ENCODE measurements at regions of chr9 and their contacts with region 1.

Region 1: GRCh38 chr9:134067904-134068743 is at the start of gene BRD3:
- DNase-seq: peak; percentile 91
- H3K4me3 ChIP-seq: peak within 1 kb of the TSS; percentile 67 to 94 (median 94)
- H3K27ac ChIP-seq: peak within 1 kb of the TSS; percentile 97 to 100 (median 98)
- H3K4me1 ChIP-seq: peaks cover 0 to 45% (median 37%) of the 10 kb centered on the region in 4 donors
- H3K27me3 ChIP-seq: no peaks in the 10 kb centered on the region
- CTCF ChIP-seq: no peak
- EP300 ChIP-seq: no peak
- POLR2A ChIP-seq: no peak
- total RNA-seq, gene BRD3: 21.8 to 34.5 (median 25.7) TPM

Region 2: DNA sequence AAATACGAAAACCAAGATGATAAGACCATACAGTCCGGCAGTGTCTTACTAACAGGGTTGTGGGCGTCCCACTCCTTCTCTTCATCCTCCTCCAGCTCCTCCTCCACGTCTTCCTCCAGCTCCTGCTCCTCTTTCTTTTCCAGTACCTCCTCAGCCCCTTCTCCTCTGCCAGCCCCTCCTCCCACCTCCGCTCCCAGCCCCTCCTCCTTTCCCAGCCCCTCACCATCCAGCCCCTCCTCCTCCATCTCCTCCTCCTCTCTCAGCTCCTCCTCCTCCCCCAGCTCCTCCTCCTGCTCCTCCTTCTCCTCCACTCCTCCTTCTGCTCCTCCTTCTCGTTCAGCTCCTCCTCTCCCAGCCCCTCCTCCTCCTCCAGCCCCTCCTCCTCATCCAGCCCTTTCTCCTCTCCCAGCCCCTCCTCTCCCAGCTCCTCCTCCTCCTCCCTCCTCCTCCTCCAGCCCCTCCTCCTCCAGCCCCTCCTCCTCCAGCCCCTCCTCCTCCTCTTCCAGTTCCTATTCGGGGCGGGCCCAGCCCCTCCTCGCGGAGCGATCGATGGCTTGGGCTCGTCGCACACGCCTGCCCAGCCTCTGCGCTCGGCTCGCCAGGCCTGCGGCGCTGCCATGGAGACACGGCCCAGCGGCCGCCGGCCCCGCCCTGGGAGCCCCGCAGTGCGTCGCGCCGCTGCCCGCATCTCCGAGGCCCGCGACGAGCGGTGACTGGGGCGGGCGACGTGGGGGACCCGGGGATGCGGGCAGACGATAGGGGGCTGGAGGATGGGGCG is 43.1 kb before region 1 on chr9 and contains the start of gene BRD3OS:
- intact Hi-C with region 1: loop called (anchors 2 kb)
- DNase-seq: peak; percentile 99
- H3K4me3 ChIP-seq: peak within 1 kb of the TSS; percentile 66 to 95 (median 84)
- H3K27ac ChIP-seq: peak within 1 kb of the TSS; percentile 76 to 82 (median 82)
- H3K4me1 ChIP-seq: peaks cover 0 to 20% (median 11%) of the 10 kb centered on the region in 4 donors
- H3K27me3 ChIP-seq: no peaks in the 10 kb centered on the region
- CTCF ChIP-seq: no peak
- EP300 ChIP-seq: no peak
- POLR2A ChIP-seq: no peak
- total RNA-seq, gene BRD3OS: 11.7 to 19.4 (median 12.7) TPM

Region 3: GRCh38 chr9:134135343-134136118 is 67.4 kb after region 1 on chr9 and contains the start of gene WDR5:
- intact Hi-C with region 1: loop called (anchors 1 kb)
- DNase-seq: peak; percentile 96
- H3K4me3 ChIP-seq: peak within 1 kb of the TSS; percentile 63 to 96 (median 84)
- H3K27ac ChIP-seq: peak within 1 kb of the TSS; percentile 87 to 95 (median 90)
- H3K4me1 ChIP-seq: peaks cover 0 to 56% (median 52%) of the 10 kb centered on the region in 4 donors
- H3K27me3 ChIP-seq: no peaks in the 10 kb centered on the region
- CTCF ChIP-seq: no peak
- EP300 ChIP-seq: no peak
- POLR2A ChIP-seq: peak; percentile 16
- total RNA-seq, gene WDR5: 13.6 to 18.3 (median 15.0) TPM

Measured in sigmoid colon (tissue), 7 donors.